ENCODE measurements at regions of chr4 and their contacts with region 1.

Region 1: GRCh38 chr4:110165382-110166285 is 32.8 kb downstream of the ELOVL6 start:
- DNase-seq: peak; percentile 85
- H3K4me3 ChIP-seq: no peak overlapping the region
- H3K27ac ChIP-seq: peak overlapping the region; percentile 46
- H3K4me1 ChIP-seq: peaks cover 34% of the 10 kb centered on the region
- H3K27me3 ChIP-seq: no peaks in the 10 kb centered on the region
- CTCF ChIP-seq: no peak

Region 2: GRCh38 chr4:110119337-110119736 is 46.3 kb before region 1 on chr4:
- CTCF ChIA-PET with region 1: no interaction called
- dilution Hi-C with region 1: no loop called
- in situ Hi-C with region 1: no loop called
- intact Hi-C with region 1: no loop called
- DNase-seq: peak; percentile 59
- H3K4me3 ChIP-seq: no peak overlapping the region
- H3K27ac ChIP-seq: no peak overlapping the region
- H3K4me1 ChIP-seq: peaks cover 17% of the 10 kb centered on the region
- H3K27me3 ChIP-seq: no peaks in the 10 kb centered on the region
- CTCF ChIP-seq: no peak

Region 3: DNA sequence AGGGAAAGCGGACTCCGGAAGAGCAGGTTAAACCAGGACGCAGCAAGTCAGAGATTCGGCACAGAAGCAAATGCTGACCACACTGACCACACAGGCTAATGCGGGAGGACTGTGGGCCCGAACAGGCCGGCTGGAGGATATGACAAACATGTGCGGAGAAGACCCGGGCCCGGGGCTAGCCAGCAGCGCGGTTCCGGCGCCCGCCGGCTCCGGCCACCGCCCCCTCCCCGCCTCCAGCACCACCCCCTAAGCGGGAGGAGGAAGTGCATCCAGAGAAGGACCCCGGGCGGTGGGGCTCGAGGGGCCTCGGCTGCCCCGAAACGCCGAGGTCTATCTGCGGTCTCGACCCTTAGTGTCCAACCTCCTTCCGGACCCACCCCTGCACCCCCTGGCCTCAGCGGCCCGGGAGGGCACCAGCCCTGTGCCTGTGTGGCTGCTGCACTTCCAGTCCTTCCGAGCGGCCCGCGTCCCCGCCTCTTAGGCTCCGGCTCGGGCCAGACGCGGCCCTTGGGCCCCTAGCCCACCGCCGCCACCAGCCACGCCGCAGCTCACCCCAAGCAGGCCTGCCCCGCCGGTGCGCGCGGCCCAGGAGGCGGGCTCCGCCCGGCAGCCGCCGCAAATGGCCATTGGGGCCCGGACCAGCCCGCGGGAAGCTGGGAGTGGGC is 30.7 kb after region 1 on chr4:
- CTCF ChIA-PET with region 1: no interaction called
- dilution Hi-C with region 1: no loop called
- in situ Hi-C with region 1: no loop called
- intact Hi-C with region 1: loop called (anchors 2 kb)
- DNase-seq: peak; percentile 40
- H3K4me3 ChIP-seq: peak overlapping the region; percentile 62 to 82 (median 78)
- H3K27ac ChIP-seq: peak overlapping the region; percentile 71
- H3K4me1 ChIP-seq: peaks cover 29% of the 10 kb centered on the region
- H3K27me3 ChIP-seq: no peaks in the 10 kb centered on the region
- CTCF ChIP-seq: no peak

Region 4: GRCh38 chr4:110224812-110225211 is 59.2 kb after region 1 on chr4:
- CTCF ChIA-PET with region 1: no interaction called
- dilution Hi-C with region 1: no loop called
- in situ Hi-C with region 1: no loop called
- intact Hi-C with region 1: no loop called
- DNase-seq: no peak
- H3K4me3 ChIP-seq: no peak overlapping the region
- H3K27ac ChIP-seq: no peak overlapping the region
- H3K4me1 ChIP-seq: no peaks in the 10 kb centered on the region
- H3K27me3 ChIP-seq: no peaks in the 10 kb centered on the region
- CTCF ChIP-seq: no peak

Measured in mammary epithelial cell (primary cell).